Heart right ventricle (tissue), 16 donors: ENCODE measurements at regions of chr12 and their contacts with region 1.

Region 1: DNA sequence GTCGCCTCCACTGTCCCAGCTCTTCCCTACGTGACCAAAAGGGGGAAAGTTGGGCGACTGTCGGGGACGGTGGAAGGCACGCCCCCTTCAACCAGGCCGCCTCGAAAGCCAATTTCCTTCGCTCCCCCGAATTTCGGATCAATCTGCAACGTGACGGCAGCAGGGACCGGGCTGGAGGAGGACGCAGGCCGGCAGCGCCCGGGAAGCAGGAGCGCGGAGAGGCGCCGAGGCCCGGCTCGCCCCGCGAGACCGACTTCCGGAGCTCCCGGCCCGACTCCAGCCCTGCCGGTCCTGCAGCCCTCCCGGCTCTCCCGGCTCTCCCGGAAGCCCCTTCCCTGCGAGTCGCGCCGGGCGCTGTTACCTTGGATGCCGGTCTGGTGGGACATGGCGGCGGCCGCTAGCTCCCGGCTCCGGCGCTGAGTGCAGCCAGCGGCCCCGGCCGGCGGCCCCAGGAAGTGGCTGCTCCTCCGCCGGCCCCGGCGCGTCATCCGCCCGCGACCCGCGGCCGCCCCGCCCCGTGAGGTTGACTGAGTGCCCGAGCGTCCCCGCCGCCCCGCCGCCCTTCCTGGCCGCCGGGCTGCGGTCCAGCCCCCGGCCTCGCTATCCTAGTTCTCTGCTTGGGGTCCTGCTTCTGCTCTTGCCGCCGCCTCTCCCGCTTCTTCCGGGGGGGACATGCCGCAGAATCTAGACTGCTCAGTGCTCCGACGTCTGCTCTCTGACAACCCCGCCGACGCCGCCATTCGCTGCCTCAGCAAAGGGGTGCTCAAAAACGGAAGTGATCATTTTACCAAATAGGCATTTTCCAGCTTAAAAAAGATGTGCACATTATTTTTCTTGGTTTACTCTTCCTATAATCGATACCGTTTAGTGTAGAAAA is at the start of gene TWF1:
- DNase-seq: peak; percentile 88 to 91
- ATAC-seq: peak; percentile 99 to 100 (median 100)
- H3K4me3 ChIP-seq: peak within 1 kb of the TSS; percentile 74 to 97 (median 93)
- H3K27ac ChIP-seq: peak within 1 kb of the TSS; percentile 83 to 99 (median 96)
- H3K4me1 ChIP-seq: peaks cover 0 to 46% (median 24%) of the 10 kb centered on the region in 9 donors
- H3K27me3 ChIP-seq: no peaks in the 10 kb centered on the region
- CTCF ChIP-seq: peak in 6 of 9 donors; percentile 20 to 48 (median 33)
- total RNA-seq, gene TWF1: 8.5 to 21.7 (median 10.7) TPM

Region 2: DNA sequence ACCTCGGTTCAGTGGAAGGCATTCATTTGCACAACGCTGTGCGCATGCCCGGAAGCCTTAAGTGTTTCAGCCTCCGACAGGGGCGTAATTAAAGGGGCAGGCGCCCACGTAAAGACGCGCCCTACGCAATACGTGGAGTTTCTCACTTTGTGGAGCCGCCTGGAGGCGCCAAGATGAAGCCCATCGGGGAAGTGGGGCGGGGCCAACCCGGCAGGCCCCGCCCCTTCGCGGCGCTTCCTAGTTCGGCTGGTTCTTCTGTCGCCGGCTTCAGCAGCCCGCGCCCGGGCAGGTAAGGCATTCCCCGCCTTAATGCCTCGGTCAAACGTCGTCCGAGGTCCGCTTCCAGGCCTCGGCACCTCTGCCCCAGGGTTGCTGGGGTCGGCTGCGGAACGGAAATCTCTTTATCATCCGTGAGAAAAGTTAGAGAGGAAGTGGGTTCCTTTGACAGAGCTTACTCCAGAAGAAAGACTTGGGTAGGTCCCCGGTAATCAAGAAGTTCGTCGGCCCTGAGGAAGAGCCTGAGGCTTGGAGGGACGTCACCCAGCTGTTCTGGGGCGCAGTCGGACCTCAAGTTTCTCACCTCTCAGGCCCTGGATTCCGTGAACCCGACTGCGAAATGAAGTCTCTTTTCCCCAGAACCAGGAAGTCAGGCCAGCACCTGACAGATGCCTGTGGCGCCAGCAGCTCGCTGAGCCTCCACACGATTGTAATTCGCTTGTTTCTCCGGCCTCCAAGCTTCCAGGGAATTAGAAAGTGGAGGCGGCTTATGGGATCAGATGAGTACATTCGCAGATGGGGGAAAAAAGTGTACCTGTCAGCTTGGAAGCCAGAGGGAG is 47.2 kb before region 1 on chr12 and contains the starts of genes IRAK4 and PUS7L:
- intact Hi-C with region 1: loop called in 4 of 10 experiments (anchors 1 to 5 kb)
- DNase-seq: peak; percentile 93 to 94
- ATAC-seq: peak; percentile 99 to 100 (median 100)
- H3K4me3 ChIP-seq: peak within 1 kb of the TSS; percentile 56 to 93 (median 78)
- H3K27ac ChIP-seq: peak within 1 kb of the TSS in 9 of 10 donors; percentile 76 to 94 (median 88)
- H3K4me1 ChIP-seq: peaks cover 4 to 52% (median 26%) of the 10 kb centered on the region in 9 donors
- H3K27me3 ChIP-seq: no peaks in the 10 kb centered on the region
- CTCF ChIP-seq: peak in 8 of 9 donors; percentile 29 to 71 (median 52)
- total RNA-seq, gene IRAK4: 3.6 to 8.1 (median 4.1) TPM
- total RNA-seq, gene PUS7L: 4.1 to 7.8 (median 5.2) TPM

Region 3: GRCh38 chr12:43835656-43836474 is 29.8 kb after region 1 on chr12 and contains the start of gene TMEM117:
- intact Hi-C with region 1: loop called in 2 of 10 experiments (anchors 1 to 2 kb)
- DNase-seq: peak; percentile 80 to 86
- ATAC-seq: peak; percentile 93 to 96 (median 94)
- H3K4me3 ChIP-seq: peak within 1 kb of the TSS; percentile 40 to 86 (median 77)
- H3K27ac ChIP-seq: peak within 1 kb of the TSS; percentile 93 to 98 (median 95)
- H3K4me1 ChIP-seq: peaks cover 0 to 28% (median 19%) of the 10 kb centered on the region in 9 donors
- H3K27me3 ChIP-seq: no peaks in the 10 kb centered on the region
- CTCF ChIP-seq: no peak
- total RNA-seq, gene TMEM117: 5.9 to 8.5 (median 7.1) TPM

Region 4: DNA sequence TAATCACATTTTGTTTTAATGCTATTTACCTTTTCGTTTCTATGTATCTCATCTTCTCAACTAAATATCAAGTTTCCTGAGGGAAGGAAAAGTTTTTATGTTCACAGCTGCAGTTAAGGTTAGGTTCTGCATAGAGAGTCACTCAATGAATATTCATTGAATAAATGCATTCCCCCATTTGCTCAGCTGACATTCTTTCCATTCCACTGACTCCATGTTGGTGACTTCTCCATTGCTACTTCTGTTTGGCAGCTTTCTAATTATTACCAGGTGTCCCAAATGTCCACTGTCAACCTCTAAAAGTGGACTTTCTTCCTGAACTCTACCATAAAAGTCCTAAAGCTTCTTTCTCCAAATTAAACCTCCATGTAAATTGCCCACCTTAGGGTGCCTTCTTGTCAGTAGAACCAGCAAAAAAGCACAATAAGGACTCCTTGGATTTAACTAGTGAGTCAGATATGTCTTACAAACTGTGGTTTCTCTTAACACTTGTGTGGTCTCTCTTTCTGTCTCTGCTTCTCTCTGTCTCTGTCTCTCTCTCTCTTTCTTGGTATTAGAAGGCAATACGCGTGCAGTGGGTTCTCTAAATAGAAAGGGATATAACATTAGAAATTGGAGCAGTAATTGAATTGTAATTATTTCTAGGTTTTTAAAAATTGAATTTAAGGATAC is 115.7 kb after region 1 on chr12:
- intact Hi-C with region 1: no loop called
- DNase-seq: no peak
- ATAC-seq: no peak
- H3K4me3 ChIP-seq: no peak overlapping the region
- H3K27ac ChIP-seq: no peak overlapping the region
- H3K4me1 ChIP-seq: peaks cover 0 to 30% (median 0%) of the 10 kb centered on the region in 9 donors
- H3K27me3 ChIP-seq: no peaks in the 10 kb centered on the region
- CTCF ChIP-seq: no peak

Region 5: GRCh38 chr12:43957732-43958372 is 151.8 kb after region 1 on chr12:
- intact Hi-C with region 1: no loop called
- DNase-seq: peak in 1 of 2 donors; percentile 12
- ATAC-seq: peak in 3 of 8 donors; percentile 73 to 83 (median 73)
- H3K4me3 ChIP-seq: no peak overlapping the region
- H3K27ac ChIP-seq: no peak overlapping the region
- H3K4me1 ChIP-seq: peaks cover 0 to 10% (median 0%) of the 10 kb centered on the region in 9 donors
- H3K27me3 ChIP-seq: no peaks in the 10 kb centered on the region
- CTCF ChIP-seq: peak in 7 of 9 donors; percentile 37 to 68 (median 61)

Region 6: GRCh38 chr12:44114906-44115305 is 308.8 kb after region 1 on chr12:
- intact Hi-C with region 1: no loop called
- DNase-seq: no peak
- ATAC-seq: no peak
- H3K4me3 ChIP-seq: no peak overlapping the region
- H3K27ac ChIP-seq: no peak overlapping the region
- H3K4me1 ChIP-seq: peaks cover 0 to 14% (median 3%) of the 10 kb centered on the region in 9 donors
- H3K27me3 ChIP-seq: no peaks in the 10 kb centered on the region
- CTCF ChIP-seq: no peak